ENCODE measurements at regions of chr7 and their contacts with region 1.

Region 1: DNA sequence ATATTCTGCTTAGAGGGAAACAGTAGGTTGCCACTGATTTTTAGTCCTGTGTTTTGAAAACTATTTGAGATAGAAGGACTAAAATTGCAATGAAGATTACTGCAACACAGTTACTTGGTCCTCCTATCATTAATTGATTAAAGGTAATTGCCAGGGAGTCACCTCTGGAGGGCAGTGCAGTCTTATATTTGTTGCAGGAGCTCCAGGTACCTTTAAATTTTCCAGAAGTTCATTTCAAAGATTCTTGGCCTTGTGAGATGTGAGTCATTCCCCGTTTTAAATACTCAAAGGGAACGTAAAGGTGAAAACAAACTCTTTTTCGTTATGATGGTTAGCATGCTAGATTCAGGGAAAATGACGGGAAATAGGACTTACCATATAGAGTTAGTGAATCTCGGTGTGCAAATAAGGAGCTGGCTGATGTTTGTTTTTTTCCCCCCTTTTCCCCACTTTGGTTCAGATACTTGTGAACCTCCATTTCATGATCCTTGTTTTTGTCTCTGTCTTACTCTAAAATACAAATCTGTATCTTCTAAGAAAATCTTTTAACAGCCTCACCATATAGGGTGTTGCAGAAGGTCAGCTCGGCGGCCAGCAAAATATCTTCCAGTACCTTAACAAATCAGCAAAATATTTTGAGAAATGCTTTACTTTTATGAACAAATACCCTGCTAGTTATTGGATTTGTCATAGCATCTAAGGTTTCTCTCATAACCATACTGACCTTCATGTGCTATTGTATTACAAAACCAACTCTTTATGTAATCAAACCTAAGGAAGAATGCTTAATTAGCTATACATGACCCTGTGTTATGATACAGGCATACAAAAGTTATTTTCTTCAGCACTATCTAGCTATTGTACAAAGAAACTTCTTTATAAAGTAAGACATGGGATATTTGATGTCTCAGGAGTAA is 143.0 kb upstream of the HDAC9 start:
- DNase-seq: peak; percentile 59
- H3K4me3 ChIP-seq: no peak overlapping the region; a peak in 1 of 4 replicates
- H3K27ac ChIP-seq: peak overlapping the region in 1 of 2 experiments; percentile 39; a peak in 2 of 4 replicates
- H3K4me1 ChIP-seq: peaks cover 8 to 36% of the 10 kb centered on the region in 2 experiments; a peak in 3 of 4 replicates
- H3K27me3 ChIP-seq: no peaks in the 10 kb centered on the region
- CTCF ChIP-seq: peak; percentile 97
- EP300 ChIP-seq: no peak
- RAD21 ChIP-seq: peak; percentile 99

Region 2: GRCh38 chr7:18086165-18087030 is 266.2 kb before region 1 on chr7:
- CTCF ChIA-PET with region 1: no interaction called
- POLR2A ChIA-PET with region 1: no interaction called
- DNase-seq: peak; percentile 59
- H3K4me3 ChIP-seq: peak overlapping the region; percentile 51 to 67
- H3K27ac ChIP-seq: no peak overlapping the region
- H3K4me1 ChIP-seq: peaks cover 0 to 10% of the 10 kb centered on the region in 2 experiments; a peak in 2 of 4 replicates
- H3K27me3 ChIP-seq: peaks cover 41% of the 10 kb centered on the region
- CTCF ChIP-seq: no peak
- EP300 ChIP-seq: no peak
- RAD21 ChIP-seq: no peak

Region 3: DNA sequence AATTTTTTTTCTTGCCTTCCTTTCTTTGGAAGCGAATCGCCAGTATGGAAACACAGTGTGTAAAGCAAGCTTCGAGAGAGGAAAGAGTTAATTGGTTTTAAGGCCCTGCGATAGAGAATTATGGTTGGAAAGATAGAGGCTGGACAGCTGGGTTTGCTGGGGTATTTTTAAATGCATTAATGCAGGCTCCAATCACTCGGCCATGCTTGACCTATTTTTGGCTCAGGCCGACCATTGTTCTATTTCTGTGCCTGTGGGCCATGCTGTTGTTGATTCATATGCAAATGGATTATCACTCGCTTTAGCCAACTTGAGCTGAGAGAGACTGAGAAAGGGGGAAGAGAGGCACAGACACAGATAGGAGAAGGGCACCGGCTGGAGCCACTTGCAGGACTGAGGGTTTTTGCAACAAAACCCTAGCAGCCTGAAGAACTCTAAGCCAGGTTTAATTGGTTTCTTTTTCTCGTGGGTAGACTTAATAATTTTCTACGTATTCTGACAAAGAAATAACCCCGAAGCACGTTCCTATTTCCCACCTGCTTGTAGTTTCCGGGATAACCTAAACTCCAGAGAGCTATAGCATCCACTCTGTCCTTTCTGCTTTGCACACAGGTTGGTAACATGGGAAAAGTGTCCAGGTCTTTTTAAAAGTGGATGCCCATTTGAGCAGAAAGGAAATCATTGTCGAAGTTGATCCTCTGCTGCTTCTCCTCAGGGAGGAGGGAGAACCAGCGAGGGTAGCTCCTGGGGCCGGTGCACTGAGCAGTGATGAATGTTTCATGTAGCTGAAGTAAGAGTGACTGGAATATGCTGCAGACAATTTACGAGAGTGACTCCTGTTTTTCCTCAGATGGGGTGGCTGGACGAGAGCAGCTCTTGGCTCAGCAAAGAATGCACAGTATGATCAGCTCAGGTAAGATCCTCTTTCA is 143.1 kb after region 1 on chr7 and contains the start of gene HDAC9:
- CTCF ChIA-PET with region 1: interaction called, 52 read pairs
- POLR2A ChIA-PET with region 1: interaction called, 8 read pairs
- DNase-seq: peak; percentile 49
- H3K4me3 ChIP-seq: peak within 1 kb of the TSS; percentile 63 to 67
- H3K27ac ChIP-seq: peak within 1 kb of the TSS; percentile 80 to 100
- H3K4me1 ChIP-seq: peaks cover 8 to 53% of the 10 kb centered on the region in 2 experiments; a peak in 3 of 4 replicates
- H3K27me3 ChIP-seq: no peaks in the 10 kb centered on the region
- CTCF ChIP-seq: no peak
- EP300 ChIP-seq: peak; percentile 62 to 93; a peak in 2 of 4 replicates
- RAD21 ChIP-seq: peak; percentile 43
- polyA plus RNA-seq, gene HDAC9: 11.6 and 19.8 TPM in 2 replicates

Region 4: GRCh38 chr7:18590744-18591340 is 238.2 kb after region 1 on chr7:
- CTCF ChIA-PET with region 1: interaction called, 138 read pairs
- POLR2A ChIA-PET with region 1: no interaction called
- DNase-seq: peak; percentile 62
- H3K4me3 ChIP-seq: no peak overlapping the region
- H3K27ac ChIP-seq: peak overlapping the region in 1 of 2 experiments; percentile 50; a peak in 3 of 4 replicates
- H3K4me1 ChIP-seq: peaks cover 0 to 2% of the 10 kb centered on the region in 2 experiments; a peak in 1 of 4 replicates
- H3K27me3 ChIP-seq: no peaks in the 10 kb centered on the region
- CTCF ChIP-seq: peak; percentile 96
- EP300 ChIP-seq: no peak
- RAD21 ChIP-seq: peak; percentile 96

Region 5: GRCh38 chr7:18666107-18666728 is 313.6 kb after region 1 on chr7:
- CTCF ChIA-PET with region 1: interaction called, 20 read pairs
- POLR2A ChIA-PET with region 1: no interaction called
- DNase-seq: peak; percentile 53
- H3K4me3 ChIP-seq: no peak overlapping the region
- H3K27ac ChIP-seq: peak overlapping the region; percentile 81 to 82
- H3K4me1 ChIP-seq: peaks cover 9 to 16% of the 10 kb centered on the region in 2 experiments; a peak in 3 of 4 replicates
- H3K27me3 ChIP-seq: no peaks in the 10 kb centered on the region
- CTCF ChIP-seq: peak; percentile 100
- EP300 ChIP-seq: no peak
- RAD21 ChIP-seq: peak; percentile 81

Region 6: DNA sequence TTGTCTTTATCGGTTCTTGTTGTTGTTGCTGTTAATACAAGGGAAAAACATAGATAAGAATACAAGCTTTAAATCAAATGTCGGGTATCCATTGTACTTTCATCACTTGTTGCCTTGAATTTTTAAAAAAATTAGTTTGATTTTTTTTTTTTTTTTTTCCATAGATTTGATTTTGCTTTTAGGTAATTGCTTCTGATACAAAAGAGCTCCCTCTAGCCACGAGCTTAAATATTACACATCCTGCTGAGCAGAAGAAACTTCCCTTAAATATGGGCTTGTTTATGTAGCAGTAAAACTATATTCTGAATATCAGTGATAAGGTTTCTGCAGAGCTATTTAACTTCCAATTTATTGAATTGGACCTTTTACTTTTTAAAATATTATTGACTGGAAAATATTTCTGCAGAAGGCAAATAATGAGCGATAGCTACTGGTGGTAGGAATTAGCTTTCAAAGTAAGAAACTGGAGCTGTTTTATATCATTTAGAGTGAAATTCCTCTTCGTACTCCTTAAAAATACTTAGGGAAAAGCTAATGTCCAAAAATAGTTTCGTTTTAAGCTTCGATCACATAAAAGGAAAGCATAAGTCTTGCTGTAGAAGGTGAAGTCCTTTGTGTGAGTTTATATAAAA is 1139.3 kb after region 1 on chr7:
- CTCF ChIA-PET with region 1: interaction called, 11 read pairs
- POLR2A ChIA-PET with region 1: no interaction called
- DNase-seq: peak; percentile 27
- H3K4me3 ChIP-seq: no peak overlapping the region
- H3K27ac ChIP-seq: no peak overlapping the region
- H3K4me1 ChIP-seq: no peaks in the 10 kb centered on the region
- H3K27me3 ChIP-seq: no peaks in the 10 kb centered on the region
- CTCF ChIP-seq: peak; percentile 88
- EP300 ChIP-seq: no peak
- RAD21 ChIP-seq: peak; percentile 64